ENCODE measurements at regions of chr21 and their contacts with region 1.

Region 1: GRCh38 chr21:39613041-39613854 is 508 bp downstream of the B3GALT5 start:
- DNase-seq: no peak
- ATAC-seq: no peak
- H3K4me3 ChIP-seq: peak overlapping the region; percentile 36
- H3K27ac ChIP-seq: no peak overlapping the region
- H3K4me1 ChIP-seq: no peaks in the 10 kb centered on the region
- H3K27me3 ChIP-seq: peaks cover 4 to 45% (median 13%) of the 10 kb centered on the region in 3 donors
- CTCF ChIP-seq: no peak

Region 2: DNA sequence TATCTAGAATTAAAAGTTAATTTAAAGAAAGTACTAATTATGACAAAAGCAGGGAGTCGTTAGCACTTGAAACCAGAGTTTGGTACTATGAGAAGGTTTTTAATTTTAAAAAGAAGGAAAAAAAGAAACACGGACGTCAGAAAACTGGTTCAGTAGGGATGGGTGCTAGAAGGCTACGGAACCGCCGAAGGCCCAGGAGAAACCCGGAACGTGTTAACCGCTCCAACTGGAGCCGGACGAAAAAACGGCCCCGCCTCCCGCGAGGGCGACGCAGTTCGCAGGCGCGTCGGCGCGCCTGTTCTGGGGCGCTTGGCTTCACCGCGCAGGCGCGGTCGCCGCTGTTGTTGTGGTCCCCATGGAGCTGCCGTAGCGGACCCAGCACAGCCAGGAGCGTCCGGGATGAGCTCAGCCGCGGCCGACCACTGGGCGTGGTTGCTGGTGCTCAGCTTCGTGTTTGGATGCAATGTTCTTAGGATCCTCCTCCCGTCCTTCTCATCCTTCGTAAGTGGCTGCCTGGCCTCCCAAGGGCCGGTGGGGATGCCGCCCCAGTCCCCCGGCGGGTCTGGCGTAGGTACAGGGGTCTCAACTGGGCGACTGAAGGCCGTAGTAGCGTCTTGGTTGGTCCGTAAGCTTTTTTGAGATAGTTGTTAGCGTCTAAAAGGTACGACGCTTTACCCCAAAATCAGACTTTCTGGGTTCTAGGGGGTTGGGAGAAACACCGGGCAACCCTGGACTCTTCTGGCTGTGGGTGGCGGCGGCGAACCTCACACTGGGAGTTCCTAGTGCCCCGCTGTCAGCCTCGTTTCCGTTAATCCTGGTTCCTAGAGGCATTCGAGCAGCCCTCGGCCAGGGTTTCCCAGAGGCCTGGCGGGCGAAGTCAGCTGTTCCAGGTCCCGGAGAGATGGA is 233.0 kb before region 1 on chr21:
- intact Hi-C with region 1: no loop called
- DNase-seq: peak; percentile 97 to 99
- ATAC-seq: peak; percentile 99
- H3K4me3 ChIP-seq: peak overlapping the region; percentile 89
- H3K27ac ChIP-seq: peak overlapping the region; percentile 92
- H3K4me1 ChIP-seq: peaks cover 10% of the 10 kb centered on the region
- H3K27me3 ChIP-seq: no peaks in the 10 kb centered on the region
- CTCF ChIP-seq: no peak

Region 3: DNA sequence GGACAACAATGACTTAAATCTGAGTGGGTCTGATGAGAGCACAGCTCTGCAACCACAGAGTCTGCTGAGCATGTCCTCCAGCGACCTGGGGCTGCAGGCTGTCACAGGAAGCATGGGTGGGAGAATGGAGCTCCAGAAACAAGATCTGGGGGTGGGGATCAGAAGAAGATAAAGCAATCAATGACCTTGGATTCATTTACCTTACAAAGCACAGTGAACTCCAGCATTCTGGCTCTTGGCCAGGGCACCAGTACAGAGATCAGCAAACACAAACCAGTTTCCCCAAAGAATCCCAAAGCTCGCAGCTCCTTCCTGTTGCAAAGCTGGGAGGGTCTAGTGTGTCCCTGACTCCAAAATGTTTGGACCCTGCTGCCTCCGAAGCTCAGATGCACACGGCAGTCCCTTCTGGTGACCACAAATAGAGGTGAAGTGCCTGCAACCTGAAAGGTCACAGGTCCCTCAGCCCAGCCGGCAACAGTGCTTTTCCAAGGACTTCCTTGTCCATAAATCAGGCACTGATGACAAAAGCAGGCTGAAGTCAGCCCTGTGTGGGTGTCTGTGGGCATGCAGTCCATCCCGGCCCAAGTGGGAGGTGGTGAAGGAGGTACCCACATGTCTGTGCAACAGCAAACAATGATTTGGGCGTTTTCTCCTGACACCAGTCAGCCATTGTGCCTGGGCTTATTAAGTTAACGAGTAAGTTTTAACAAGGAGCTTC is 85.4 kb before region 1 on chr21:
- intact Hi-C with region 1: no loop called
- DNase-seq: no peak
- ATAC-seq: no peak
- H3K4me3 ChIP-seq: no peak overlapping the region
- H3K27ac ChIP-seq: no peak overlapping the region
- H3K4me1 ChIP-seq: peaks cover 17% of the 10 kb centered on the region
- H3K27me3 ChIP-seq: no peaks in the 10 kb centered on the region
- CTCF ChIP-seq: no peak

Region 4: GRCh38 chr21:39681831-39682230 is 68.6 kb after region 1 on chr21:
- intact Hi-C with region 1: loop called in 1 of 2 experiments (anchors 2 kb)
- DNase-seq: no peak
- ATAC-seq: no peak
- H3K4me3 ChIP-seq: no peak overlapping the region
- H3K27ac ChIP-seq: no peak overlapping the region
- H3K4me1 ChIP-seq: no peaks in the 10 kb centered on the region
- H3K27me3 ChIP-seq: no peaks in the 10 kb centered on the region
- CTCF ChIP-seq: no peak

Measured in psoas muscle (tissue), 8 donors.